ENCODE measurements at regions of chr19 and their contacts with region 1.

Region 1: GRCh38 chr19:49570138-49570856 is 10.1 kb downstream of the NOSIP start:
- DNase-seq: peak in 8 of 9 experiments; percentile 54 to 94 (median 74)
- ATAC-seq: peak; percentile 36
- H3K4me3 ChIP-seq: no peak overlapping the region
- H3K4me3 Mint-ChIP-seq: peak overlapping the region; percentile 68
- H3K27ac ChIP-seq: no peak overlapping the region
- H3K27ac Mint-ChIP-seq: peak overlapping the region; percentile 89
- H3K4me1 ChIP-seq: peaks cover 59% of the 10 kb centered on the region
- H3K4me1 Mint-ChIP-seq: peaks cover 49% of the 10 kb centered on the region
- H3K27me3 ChIP-seq: no peaks in the 10 kb centered on the region
- H3K27me3 Mint-ChIP-seq: no peaks in the 10 kb centered on the region
- CTCF ChIP-seq: peak; percentile 100

Region 2: DNA sequence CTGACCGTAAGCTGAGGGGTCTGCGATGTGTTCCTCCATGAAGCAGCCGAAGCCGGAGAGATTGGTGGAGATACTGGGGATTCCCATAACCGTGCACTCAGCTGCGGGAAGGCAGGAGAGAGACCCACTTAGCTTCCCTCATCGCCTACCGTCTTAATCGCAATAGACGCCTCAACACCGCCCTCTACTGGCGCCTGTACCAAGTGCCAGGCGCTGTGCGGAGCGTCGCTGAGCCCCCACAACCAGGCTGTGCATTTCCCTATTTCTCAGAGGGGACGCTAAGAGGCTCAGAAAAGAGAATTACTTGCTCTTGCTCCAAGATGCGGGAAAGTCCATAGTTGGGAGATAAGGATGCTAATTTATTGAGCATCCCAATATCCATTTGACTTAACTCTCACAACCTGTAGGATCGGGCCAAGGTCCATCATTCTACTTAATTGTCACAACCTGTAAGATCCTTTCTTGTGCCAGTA is 599.3 kb before region 1 on chr19:
- CTCF ChIA-PET with region 1: no interaction called
- POLR2A ChIA-PET with region 1: no interaction called
- intact Hi-C with region 1: no loop called
- DNase-seq: peak; percentile 67 to 91 (median 86)
- ATAC-seq: peak; percentile 91
- H3K4me3 ChIP-seq: no peak overlapping the region
- H3K4me3 Mint-ChIP-seq: no peak overlapping the region
- H3K27ac ChIP-seq: no peak overlapping the region
- H3K27ac Mint-ChIP-seq: no peak overlapping the region
- H3K4me1 ChIP-seq: peaks cover 10% of the 10 kb centered on the region
- H3K4me1 Mint-ChIP-seq: peaks cover 19% of the 10 kb centered on the region
- H3K27me3 ChIP-seq: no peaks in the 10 kb centered on the region
- H3K27me3 Mint-ChIP-seq: no peaks in the 10 kb centered on the region
- CTCF ChIP-seq: peak; percentile 84

Region 3: GRCh38 chr19:49272184-49272583 is 298.1 kb before region 1 on chr19:
- CTCF ChIA-PET with region 1: no interaction called
- POLR2A ChIA-PET with region 1: no interaction called
- intact Hi-C with region 1: loop called (anchors 2 kb)
- DNase-seq: no peak
- ATAC-seq: no peak
- H3K4me3 ChIP-seq: no peak overlapping the region
- H3K4me3 Mint-ChIP-seq: no peak overlapping the region
- H3K27ac ChIP-seq: no peak overlapping the region
- H3K27ac Mint-ChIP-seq: no peak overlapping the region
- H3K4me1 ChIP-seq: no peaks in the 10 kb centered on the region
- H3K4me1 Mint-ChIP-seq: no peaks in the 10 kb centered on the region
- H3K27me3 ChIP-seq: no peaks in the 10 kb centered on the region
- H3K27me3 Mint-ChIP-seq: peaks cover 13% of the 10 kb centered on the region
- CTCF ChIP-seq: no peak

Region 4: GRCh38 chr19:49473868-49474544 is 96.3 kb before region 1 on chr19 and contains the start of gene FLT3LG:
- CTCF ChIA-PET with region 1: interaction called, 26 read pairs
- POLR2A ChIA-PET with region 1: interaction called, 8 read pairs
- intact Hi-C with region 1: loop called (anchors 1 kb)
- DNase-seq: peak; percentile 83 to 97 (median 91)
- ATAC-seq: peak; percentile 58
- H3K4me3 ChIP-seq: peak within 1 kb of the TSS; percentile 88 to 98
- H3K4me3 Mint-ChIP-seq: peak within 1 kb of the TSS; percentile 91
- H3K27ac ChIP-seq: peak within 1 kb of the TSS; percentile 92 to 96
- H3K27ac Mint-ChIP-seq: peak within 1 kb of the TSS; percentile 98
- H3K4me1 ChIP-seq: peaks cover 53% of the 10 kb centered on the region
- H3K4me1 Mint-ChIP-seq: peaks cover 54% of the 10 kb centered on the region
- H3K27me3 ChIP-seq: no peaks in the 10 kb centered on the region
- H3K27me3 Mint-ChIP-seq: no peaks in the 10 kb centered on the region
- CTCF ChIP-seq: peak; percentile 83
- total RNA-seq, gene FLT3LG: 246 to 259 TPM

Region 5: GRCh38 chr19:49512970-49513745 is 57.1 kb before region 1 on chr19:
- CTCF ChIA-PET with region 1: interaction called, 28 read pairs
- POLR2A ChIA-PET with region 1: interaction called, 3 read pairs
- intact Hi-C with region 1: no loop called
- DNase-seq: peak in 2 of 9 experiments; percentile 48 to 56
- ATAC-seq: peak; percentile 72
- H3K4me3 ChIP-seq: peak overlapping the region; percentile 61 to 66
- H3K4me3 Mint-ChIP-seq: peak overlapping the region; percentile 84
- H3K27ac ChIP-seq: peak overlapping the region; percentile 32 to 33
- H3K27ac Mint-ChIP-seq: peak overlapping the region; percentile 71
- H3K4me1 ChIP-seq: peaks cover 24% of the 10 kb centered on the region
- H3K4me1 Mint-ChIP-seq: peaks cover 32% of the 10 kb centered on the region
- H3K27me3 ChIP-seq: no peaks in the 10 kb centered on the region
- H3K27me3 Mint-ChIP-seq: no peaks in the 10 kb centered on the region
- CTCF ChIP-seq: no peak

Region 6: GRCh38 chr19:49546825-49547565 is 23.3 kb before region 1 on chr19:
- CTCF ChIA-PET with region 1: interaction called, 601 read pairs
- POLR2A ChIA-PET with region 1: interaction called, 50 read pairs
- intact Hi-C with region 1: loop called (anchors 1 kb)
- DNase-seq: peak in 7 of 9 experiments; percentile 51 to 89 (median 70)
- ATAC-seq: peak; percentile 78
- H3K4me3 ChIP-seq: peak overlapping the region; percentile 3 to 41
- H3K4me3 Mint-ChIP-seq: peak overlapping the region; percentile 79
- H3K27ac ChIP-seq: no peak overlapping the region
- H3K27ac Mint-ChIP-seq: peak overlapping the region; percentile 82
- H3K4me1 ChIP-seq: peaks cover 49% of the 10 kb centered on the region
- H3K4me1 Mint-ChIP-seq: peaks cover 40% of the 10 kb centered on the region
- H3K27me3 ChIP-seq: no peaks in the 10 kb centered on the region
- H3K27me3 Mint-ChIP-seq: no peaks in the 10 kb centered on the region
- CTCF ChIP-seq: peak; percentile 89